HEK293 (cell line): ENCODE measurements at regions of chr11 and their contacts with region 1.

Region 1: DNA sequence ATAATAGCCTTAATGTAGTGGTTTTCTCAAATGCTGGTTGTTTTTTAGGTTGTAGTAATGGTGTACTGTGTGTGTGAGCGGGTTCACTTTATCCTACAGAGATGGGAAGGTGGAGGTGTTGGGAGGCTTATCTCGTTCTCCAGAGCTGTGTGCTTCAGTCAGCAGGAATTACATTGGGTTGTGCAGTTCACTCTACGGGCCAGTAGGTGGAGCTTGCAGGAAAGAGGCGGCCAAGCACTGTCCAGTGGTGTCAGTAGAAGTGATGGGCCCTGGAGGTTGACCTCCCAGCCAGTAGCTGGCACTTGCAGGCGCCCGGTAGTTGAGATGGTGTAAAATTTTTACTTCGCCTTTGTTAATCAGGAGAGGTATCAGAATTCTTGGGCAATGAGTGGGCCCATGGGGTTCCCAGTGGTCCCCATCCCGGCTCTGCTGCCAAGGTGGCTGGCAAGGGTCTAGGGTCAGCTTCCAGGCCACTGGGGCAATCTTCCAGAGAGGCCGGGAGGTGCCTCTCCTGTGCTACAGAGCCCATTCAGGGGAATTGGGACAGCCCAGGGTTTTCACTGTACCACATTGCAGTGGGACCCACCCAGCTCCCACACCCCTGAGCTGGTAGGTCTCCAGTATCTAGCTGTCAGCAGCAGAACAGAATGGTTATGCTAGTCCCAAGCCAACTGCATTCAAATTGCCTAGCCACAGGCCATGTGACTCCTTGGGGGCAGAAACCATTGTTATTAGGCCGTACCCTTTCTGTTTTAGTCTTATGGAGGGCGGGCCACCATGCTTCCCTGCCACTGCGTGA is 43.9 kb downstream of the BIRC2 start:
- H3K4me3 ChIP-seq: no peak overlapping the region
- H3K27ac ChIP-seq: no peak overlapping the region
- H3K4me1 ChIP-seq: no peaks in the 10 kb centered on the region
- CTCF ChIP-seq: peak; percentile 50

Region 2: DNA sequence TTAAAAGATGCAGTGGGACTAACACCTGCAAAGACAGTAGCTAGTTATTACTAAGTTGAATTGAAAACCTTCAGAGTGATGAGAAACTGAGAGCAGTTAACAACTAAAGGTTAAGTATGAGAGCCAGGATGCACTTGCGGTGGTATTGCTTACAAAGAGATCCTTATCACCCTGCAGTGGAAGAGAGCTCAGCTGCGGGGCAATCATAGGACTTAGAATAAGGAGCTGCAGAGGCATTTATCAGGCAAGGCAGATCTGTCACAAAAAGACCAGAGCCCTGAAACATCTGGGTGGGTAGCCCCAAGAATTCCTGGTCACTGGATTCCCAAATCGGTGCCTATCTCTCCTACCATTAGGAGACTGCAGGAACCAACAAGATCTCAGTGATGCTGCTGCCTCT is 377.9 kb before region 1 on chr11:
- CTCF ChIA-PET with region 1: no interaction called
- POLR2A ChIA-PET with region 1: no interaction called
- H3K4me3 ChIP-seq: no peak overlapping the region
- H3K27ac ChIP-seq: no peak overlapping the region
- H3K4me1 ChIP-seq: no peaks in the 10 kb centered on the region
- CTCF ChIP-seq: no peak

Region 3: GRCh38 chr11:102407901-102408300 is 17.0 kb after region 1 on chr11:
- CTCF ChIA-PET with region 1: interaction called, 32 read pairs
- POLR2A ChIA-PET with region 1: interaction called, 9 read pairs
- H3K4me3 ChIP-seq: no peak overlapping the region
- H3K27ac ChIP-seq: no peak overlapping the region
- H3K4me1 ChIP-seq: 0 out of 2 replicates have a peak, but pooled peaks cover 2% of the 10 kb centered on the region
- CTCF ChIP-seq: no peak

Region 4: GRCh38 chr11:102476812-102477211 is 85.9 kb after region 1 on chr11:
- CTCF ChIA-PET with region 1: interaction called, 11 read pairs
- POLR2A ChIA-PET with region 1: no interaction called
- H3K4me3 ChIP-seq: no peak overlapping the region
- H3K27ac ChIP-seq: no peak overlapping the region
- H3K4me1 ChIP-seq: no peaks in the 10 kb centered on the region
- CTCF ChIP-seq: no peak

Region 5: GRCh38 chr11:102495161-102496042 is 104.5 kb after region 1 on chr11:
- CTCF ChIA-PET with region 1: interaction called, 26 read pairs
- POLR2A ChIA-PET with region 1: interaction called, 5 read pairs
- H3K4me3 ChIP-seq: no peak overlapping the region
- H3K27ac ChIP-seq: no peak overlapping the region
- H3K4me1 ChIP-seq: no peaks in the 10 kb centered on the region
- CTCF ChIP-seq: no peak

Region 6: GRCh38 chr11:102560555-102561011 is 169.7 kb after region 1 on chr11:
- CTCF ChIA-PET with region 1: no interaction called
- POLR2A ChIA-PET with region 1: no interaction called
- H3K4me3 ChIP-seq: no peak overlapping the region
- H3K27ac ChIP-seq: no peak overlapping the region
- H3K4me1 ChIP-seq: no peaks in the 10 kb centered on the region
- CTCF ChIP-seq: no peak